Astrocyte of the cerebellum (primary cell): ENCODE measurements at regions of chr11 and their contacts with region 1.

Region 1: DNA sequence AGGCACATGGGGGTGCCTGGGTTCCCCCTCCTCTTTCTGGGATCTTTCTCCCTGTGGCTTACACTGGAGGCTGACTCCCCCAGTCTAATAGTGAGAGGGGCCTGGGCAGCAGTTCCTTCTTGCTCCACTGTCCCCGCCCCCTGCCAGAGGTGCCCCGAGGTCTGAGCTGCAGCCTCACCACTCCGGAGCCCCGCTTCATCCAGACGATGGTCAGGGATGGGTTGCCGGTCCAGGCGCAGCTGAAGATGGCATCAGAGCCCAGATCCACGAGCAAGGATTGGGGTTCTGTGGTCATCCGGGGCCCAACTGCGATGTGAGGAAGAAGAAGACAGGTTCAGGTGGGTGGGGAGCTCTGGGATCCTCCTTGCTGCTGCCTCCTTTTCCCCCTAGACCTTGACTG is 91.1 kb downstream of the ST3GAL4 start:
- DNase-seq: no peak
- H3K4me3 ChIP-seq: no peak overlapping the region
- CTCF ChIP-seq: no peak

Region 2: DNA sequence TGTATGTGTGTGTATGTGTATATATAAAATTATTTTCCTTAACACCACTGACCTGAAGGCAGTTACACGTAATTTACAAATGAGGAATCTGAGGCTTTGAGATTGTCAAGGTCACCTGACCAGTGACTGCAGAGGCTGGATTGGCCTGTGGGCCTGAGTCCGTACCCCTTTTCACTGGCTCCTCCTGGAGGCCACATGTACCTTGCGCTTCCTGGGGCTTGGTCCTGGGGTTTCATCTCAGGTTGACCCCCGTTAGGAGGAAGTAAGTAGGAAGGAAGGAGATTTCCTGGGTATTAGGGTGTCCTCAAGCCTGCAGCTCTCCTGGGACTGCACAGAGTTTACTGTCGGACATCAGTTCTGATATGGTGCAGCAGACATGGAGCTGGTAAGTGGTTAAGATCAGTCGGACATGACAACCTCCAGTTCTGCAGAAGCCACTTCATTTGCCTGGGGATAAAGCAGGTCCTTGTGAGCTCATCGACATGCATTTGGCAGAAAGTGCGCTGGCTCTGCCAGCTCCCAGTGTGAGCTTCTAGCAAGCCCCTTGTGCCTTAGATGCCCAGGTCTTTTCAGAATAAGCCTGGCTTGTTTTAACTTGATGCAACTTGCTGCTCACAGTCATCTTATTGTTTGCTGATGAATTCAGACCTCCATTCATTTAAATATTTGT is 54.5 kb before region 1 on chr11:
- in situ Hi-C with region 1: loop called (anchors 5 kb)
- DNase-seq: no peak
- H3K4me3 ChIP-seq: no peak overlapping the region
- CTCF ChIP-seq: peak; percentile 18

Region 3: GRCh38 chr11:126415120-126415519 is 31.5 kb before region 1 on chr11:
- in situ Hi-C with region 1: no loop called
- DNase-seq: peak; percentile 18
- H3K4me3 ChIP-seq: no peak overlapping the region
- CTCF ChIP-seq: no peak

Region 4: DNA sequence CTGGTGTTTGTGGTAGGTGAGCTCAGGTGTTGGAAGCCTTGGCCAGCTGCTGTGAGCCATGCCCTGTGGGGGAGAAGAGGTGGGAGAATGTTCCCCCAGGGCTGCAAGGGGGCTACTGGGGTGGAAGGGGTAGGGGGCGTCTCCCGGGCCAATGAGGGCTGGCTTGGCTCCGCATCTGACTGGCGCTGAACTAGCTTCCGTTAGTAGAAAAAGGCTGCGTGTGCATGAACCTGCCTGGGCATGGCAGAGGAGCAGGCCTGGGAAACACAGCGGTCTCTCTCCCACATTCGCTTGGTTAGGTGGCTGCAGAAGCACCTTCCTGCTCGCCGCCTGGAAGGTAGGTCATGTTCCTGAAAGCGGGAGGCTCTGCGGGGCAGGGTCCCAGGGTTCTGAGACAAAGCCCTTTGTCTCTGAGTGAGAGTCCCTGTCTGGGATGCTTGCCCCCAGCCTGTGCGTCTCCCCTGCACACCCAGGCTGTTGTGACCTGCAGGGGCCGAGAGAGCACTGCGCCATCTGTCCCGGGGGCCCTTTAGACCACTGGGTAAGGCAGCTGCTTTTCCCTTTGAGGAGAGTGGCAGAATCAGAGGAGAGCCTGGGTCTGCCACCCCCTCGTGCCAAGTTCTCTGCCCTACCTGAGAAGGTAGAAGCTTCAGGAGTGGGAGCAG is 87.7 kb after region 1 on chr11:
- in situ Hi-C with region 1: loop called (anchors 5 kb)
- DNase-seq: no peak
- H3K4me3 ChIP-seq: no peak overlapping the region
- CTCF ChIP-seq: no peak